ENCODE measurements at regions of chr2 and their contacts with region 1.

Region 1: DNA sequence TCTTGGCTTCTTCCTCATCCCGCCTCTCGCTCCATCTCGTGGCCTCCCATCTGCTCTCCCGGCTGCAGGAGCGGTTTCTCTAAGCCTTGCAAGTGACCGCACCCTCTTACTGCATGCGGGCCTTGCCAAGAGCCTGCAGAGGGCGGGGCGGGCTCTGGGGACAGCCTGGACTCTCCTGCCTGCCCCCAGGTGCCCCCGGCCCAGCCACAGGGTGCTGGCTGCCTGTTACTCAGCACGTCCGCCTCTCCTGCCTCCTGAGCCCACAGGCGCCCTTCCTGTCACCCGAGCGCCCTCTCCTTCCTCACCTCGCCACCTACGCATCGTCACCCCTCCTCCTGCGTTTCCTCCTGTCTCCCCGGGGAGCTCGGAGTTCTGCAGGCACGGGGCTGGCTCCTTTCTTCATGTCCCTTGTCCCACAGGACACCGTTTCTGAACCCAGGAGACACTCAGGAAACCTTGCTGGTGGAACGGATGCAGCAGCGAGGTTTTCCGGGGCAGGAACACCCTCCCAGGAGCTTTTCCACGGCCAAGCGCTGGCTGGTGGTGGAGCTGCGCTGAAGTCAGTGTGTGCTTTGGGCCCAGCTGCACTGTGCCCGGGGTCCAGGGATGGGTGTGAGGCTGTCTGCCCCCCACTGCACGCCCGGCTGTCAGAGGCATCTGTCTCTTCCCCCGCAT is 28.5 kb downstream of the HPCAL1 start:
- DNase-seq: peak; percentile 84
- ATAC-seq: peak; percentile 74
- H3K4me3 Mint-ChIP-seq: peak overlapping the region; percentile 84
- H3K27ac Mint-ChIP-seq: peak overlapping the region; percentile 85
- H3K4me1 Mint-ChIP-seq: peaks cover 64% of the 10 kb centered on the region
- H3K27me3 Mint-ChIP-seq: no peaks in the 10 kb centered on the region

Region 2: DNA sequence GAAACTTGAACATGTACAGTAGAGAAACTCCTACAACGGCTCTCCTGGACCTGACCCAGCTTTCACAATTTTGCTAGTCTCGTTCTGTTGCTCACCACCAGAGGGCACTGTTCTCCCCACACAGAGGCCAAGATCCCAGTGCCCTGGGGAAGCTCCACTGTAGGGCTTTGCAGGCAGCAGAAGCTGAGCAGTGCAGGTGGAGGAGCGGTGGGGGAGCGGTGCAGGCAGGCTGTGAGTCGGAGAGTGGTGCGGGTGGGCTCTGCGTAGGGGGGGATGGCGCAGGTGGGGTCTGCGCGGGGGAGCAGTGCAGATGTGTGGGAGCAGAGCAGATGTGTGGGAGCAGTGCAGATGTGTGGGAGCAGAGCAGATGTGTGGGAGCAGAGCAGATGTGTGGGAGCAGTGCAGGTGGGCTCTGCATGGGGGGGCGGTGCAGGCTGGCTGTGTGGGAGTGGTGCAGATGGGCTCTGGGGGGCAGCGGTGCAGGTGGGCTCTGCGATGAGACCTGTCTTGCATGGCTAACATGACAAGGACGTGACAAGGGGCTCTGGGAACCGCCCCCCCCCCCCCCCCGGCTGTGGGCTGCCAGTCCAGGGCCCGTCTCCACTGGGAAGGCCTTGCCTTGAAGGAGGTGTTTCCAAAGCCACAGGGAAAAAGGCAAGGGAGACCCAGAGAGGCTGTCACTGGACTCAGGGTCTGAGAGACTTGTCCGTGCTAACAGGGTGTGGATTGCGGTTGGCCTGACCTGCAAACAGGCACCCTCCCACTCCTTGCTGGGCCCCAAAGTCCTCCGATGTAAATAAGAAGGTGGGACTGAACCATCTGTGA is 258.3 kb before region 1 on chr2:
- CTCF ChIA-PET with region 1: no interaction called
- POLR2A ChIA-PET with region 1: no interaction called
- DNase-seq: peak; percentile 89
- ATAC-seq: peak; percentile 97
- H3K4me3 Mint-ChIP-seq: no peak overlapping the region
- H3K27ac Mint-ChIP-seq: no peak overlapping the region
- H3K4me1 Mint-ChIP-seq: peaks cover 13% of the 10 kb centered on the region
- H3K27me3 Mint-ChIP-seq: peaks cover 51% of the 10 kb centered on the region

Region 3: GRCh38 chr2:10302479-10303180 is 28.5 kb before region 1 on chr2 and contains the start of gene HPCAL1:
- CTCF ChIA-PET with region 1: interaction called, 63 read pairs
- POLR2A ChIA-PET with region 1: interaction called, 47 read pairs
- DNase-seq: peak; percentile 87
- ATAC-seq: peak; percentile 72
- H3K4me3 Mint-ChIP-seq: peak within 1 kb of the TSS; percentile 99
- H3K27ac Mint-ChIP-seq: peak within 1 kb of the TSS; percentile 77
- H3K4me1 Mint-ChIP-seq: peaks cover 75% of the 10 kb centered on the region
- H3K27me3 Mint-ChIP-seq: no peaks in the 10 kb centered on the region
- total RNA-seq, gene HPCAL1: 55.8 to 56.6 TPM

Region 4: DNA sequence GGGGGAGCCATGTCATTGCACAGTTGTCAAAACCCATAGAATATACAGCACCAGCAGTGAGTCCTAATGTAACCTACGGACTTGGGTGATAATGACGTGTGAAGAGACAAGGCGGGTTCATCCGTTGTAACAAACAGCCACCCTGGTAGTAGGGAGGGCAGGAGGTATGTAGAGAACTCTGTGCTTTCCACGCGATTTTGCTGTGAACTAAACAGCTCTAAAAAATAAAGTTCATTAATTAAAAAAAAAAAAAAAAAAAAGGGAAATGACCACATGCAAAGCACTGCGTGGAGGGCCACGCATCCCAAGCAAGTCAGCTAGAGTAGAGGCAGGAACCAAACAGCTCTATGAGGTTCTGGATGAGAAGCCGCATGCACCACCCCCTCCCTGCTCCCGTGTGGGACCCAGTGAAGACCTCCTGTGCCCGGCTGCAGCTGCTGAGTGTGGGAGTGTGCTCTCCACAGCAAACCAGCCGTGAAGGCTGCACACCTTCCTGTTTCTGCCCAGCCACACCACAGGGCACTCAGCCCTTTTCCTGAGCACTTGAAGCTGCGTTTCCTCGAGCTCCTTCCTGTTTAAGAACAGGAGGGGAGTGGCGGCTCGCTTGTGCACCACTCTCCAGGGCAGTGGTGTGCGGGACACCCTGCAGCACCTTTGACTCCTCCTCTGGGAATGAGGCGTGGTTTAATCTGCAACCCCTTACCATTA is 51.3 kb after region 1 on chr2:
- CTCF ChIA-PET with region 1: interaction called, 10 read pairs
- POLR2A ChIA-PET with region 1: interaction called, 4 read pairs
- DNase-seq: peak; percentile 60
- ATAC-seq: peak; percentile 72
- H3K4me3 Mint-ChIP-seq: peak overlapping the region; percentile 35
- H3K27ac Mint-ChIP-seq: peak overlapping the region; percentile 68
- H3K4me1 Mint-ChIP-seq: peaks cover 83% of the 10 kb centered on the region
- H3K27me3 Mint-ChIP-seq: no peaks in the 10 kb centered on the region